Pancreas (tissue), 10 donors: ENCODE measurements at regions of chr1 and their contacts with region 1.

Region 1: GRCh38 chr1:16078925-16079656 is 5.6 kb upstream of the FAM131C start:
- DNase-seq: peak; percentile 72 to 86 (median 80)
- ATAC-seq: peak; percentile 65 to 87 (median 83)
- H3K4me3 ChIP-seq: no peak overlapping the region
- H3K27ac ChIP-seq: no peak overlapping the region
- H3K4me1 ChIP-seq: no peaks in the 10 kb centered on the region
- H3K27me3 ChIP-seq: no peaks in the 10 kb centered on the region
- CTCF ChIP-seq: peak; percentile 69 to 86 (median 82)

Region 2: GRCh38 chr1:15741183-15741850 is 337.8 kb before region 1 on chr1:
- intact Hi-C with region 1: no loop called
- DNase-seq: peak; percentile 80 to 96 (median 89)
- ATAC-seq: peak; percentile 73 to 91 (median 89)
- H3K4me3 ChIP-seq: no peak overlapping the region
- H3K27ac ChIP-seq: no peak overlapping the region
- H3K4me1 ChIP-seq: peaks cover 18 to 22% (median 19%) of the 10 kb centered on the region in 3 donors
- H3K27me3 ChIP-seq: no peaks in the 10 kb centered on the region
- CTCF ChIP-seq: peak; percentile 79 to 94 (median 83)

Region 3: DNA sequence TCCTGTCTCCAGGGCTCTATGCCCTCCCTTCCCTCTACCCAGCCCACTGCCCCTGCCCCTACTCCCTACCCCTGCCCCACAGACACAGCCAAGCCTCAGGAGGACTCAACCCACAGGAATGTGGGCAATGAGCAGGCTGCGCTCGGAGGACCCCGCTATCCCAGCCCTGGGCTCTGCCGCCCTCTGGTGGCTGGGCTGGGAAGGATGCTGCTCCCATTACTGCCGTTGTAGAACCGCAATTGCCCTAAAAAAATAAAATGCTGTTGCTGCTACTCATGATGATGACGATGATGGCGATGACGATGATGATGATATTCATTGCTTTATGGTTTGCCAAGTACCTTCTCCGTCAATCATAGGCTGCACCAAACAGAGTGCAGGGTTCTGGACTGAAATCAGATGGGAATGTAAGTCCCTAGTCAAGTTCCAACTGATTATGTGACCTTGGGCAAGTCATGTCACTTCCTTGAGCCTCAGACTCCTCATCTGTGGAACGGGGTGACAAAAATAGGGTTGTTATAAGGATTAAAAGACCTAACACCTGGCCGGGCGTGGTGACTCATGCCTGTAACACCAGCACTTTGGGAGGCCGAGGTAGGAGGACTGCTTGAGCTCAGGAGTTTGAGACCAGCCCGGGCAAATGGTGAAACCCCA is 108.8 kb after region 1 on chr1:
- intact Hi-C with region 1: loop called (anchors 2 to 5 kb)
- DNase-seq: peak; percentile 56 to 92 (median 80)
- ATAC-seq: peak; percentile 81 to 97 (median 84)
- H3K4me3 ChIP-seq: no peak overlapping the region
- H3K27ac ChIP-seq: no peak overlapping the region
- H3K4me1 ChIP-seq: no peaks in the 10 kb centered on the region
- H3K27me3 ChIP-seq: no peaks in the 10 kb centered on the region
- CTCF ChIP-seq: peak; percentile 82 to 95 (median 88)

Region 4: DNA sequence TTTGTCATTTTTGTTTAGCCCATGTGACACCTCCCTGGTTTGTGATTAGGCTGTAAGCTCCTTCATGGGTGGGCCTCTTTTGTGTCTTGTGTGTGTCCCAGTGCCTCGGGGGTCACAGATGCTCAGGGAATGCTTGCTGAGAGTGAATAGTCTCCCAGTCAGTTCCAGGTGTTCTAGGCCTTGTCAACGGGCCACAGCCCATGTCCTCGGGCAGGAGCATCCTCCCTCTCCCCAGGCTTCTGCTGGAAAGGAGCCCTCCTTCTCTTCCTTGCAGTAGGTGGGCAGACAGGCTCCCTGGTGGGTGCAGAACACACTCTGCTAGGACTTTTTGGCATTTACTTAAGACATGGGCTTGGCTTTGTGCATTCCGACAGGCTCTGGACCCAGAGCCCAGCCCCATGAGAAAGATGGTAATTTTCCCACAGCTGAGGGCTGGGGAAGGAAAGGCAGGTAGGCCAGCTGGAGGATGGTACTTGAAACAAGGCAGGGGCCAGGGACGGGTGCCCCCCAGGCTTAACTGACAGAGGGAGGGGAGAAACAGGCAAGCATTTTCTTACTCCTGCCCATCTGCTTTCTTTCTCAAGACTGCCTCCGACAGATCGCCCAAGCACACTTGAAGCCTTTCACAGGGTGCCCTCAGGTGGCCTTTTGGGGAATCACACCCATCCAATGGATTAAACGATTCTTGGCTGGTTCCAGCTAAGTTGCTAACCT is 165.0 kb after region 1 on chr1:
- intact Hi-C with region 1: loop called in 1 of 3 experiments (anchors 10 kb)
- DNase-seq: peak; percentile 75 to 90 (median 84)
- ATAC-seq: peak; percentile 44 to 78 (median 72)
- H3K4me3 ChIP-seq: no peak overlapping the region
- H3K27ac ChIP-seq: peak overlapping the region in 2 of 4 donors; percentile 9 to 28
- H3K4me1 ChIP-seq: peaks cover 21 to 30% (median 23%) of the 10 kb centered on the region in 3 donors
- H3K27me3 ChIP-seq: no peaks in the 10 kb centered on the region
- CTCF ChIP-seq: peak; percentile 76 to 87 (median 80)

Region 5: GRCh38 chr1:16366722-16367257 is 287.7 kb after region 1 on chr1 and contains the start of gene SZRD1:
- intact Hi-C with region 1: loop called in 1 of 3 experiments (anchors 5 kb)
- DNase-seq: peak; percentile 93 to 98 (median 96)
- ATAC-seq: peak; percentile 89 to 94 (median 90)
- H3K4me3 ChIP-seq: peak within 1 kb of the TSS; percentile 71 to 93 (median 88)
- H3K27ac ChIP-seq: peak within 1 kb of the TSS; percentile 78 to 98 (median 92)
- H3K4me1 ChIP-seq: peaks cover 3 to 27% (median 15%) of the 10 kb centered on the region in 3 donors
- H3K27me3 ChIP-seq: no peaks in the 10 kb centered on the region
- CTCF ChIP-seq: no peak
- total RNA-seq, gene SZRD1: 24.9 to 53.5 (median 37.0) TPM